ENCODE measurements at regions of chr20 and their contacts with region 1.

Region 1: GRCh38 chr20:9884061-9884460 is 45.2 kb upstream of the PAK5 start:
- DNase-seq: no peak
- H3K4me3 ChIP-seq: no peak overlapping the region
- H3K27ac ChIP-seq: no peak overlapping the region
- H3K4me1 ChIP-seq: peaks cover 0 to 2% (median 0%) of the 10 kb centered on the region in 4 experiments; a peak in 1 of 7 replicates
- H3K27me3 ChIP-seq: no peaks in the 10 kb centered on the region
- CTCF ChIP-seq: peak in 2 of 3 experiments; percentile 25 to 43; a peak in 2 of 4 replicates
- EP300 ChIP-seq: no peak
- POLR2A ChIP-seq: no peak
- RAD21 ChIP-seq: peak; percentile 65 to 75

Region 2: DNA sequence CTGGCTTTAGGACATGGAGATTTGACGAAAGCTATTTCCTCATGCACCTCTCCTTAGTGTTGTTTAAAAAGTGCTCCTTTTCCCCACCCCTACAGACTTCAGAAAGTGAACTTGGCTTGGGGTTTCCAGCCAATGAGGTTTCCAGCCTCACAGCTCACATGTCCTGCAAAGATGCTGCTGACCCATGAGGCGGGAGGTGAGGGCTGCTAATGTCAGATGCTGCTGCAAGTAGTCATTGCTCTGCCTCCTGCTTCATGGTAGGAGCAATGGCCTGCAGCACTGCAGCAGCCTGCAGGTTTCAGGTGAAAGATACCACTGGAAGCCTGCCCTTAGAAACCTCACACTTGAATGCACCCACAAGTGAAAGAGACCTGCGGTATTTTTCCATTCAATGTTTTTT is 256.8 kb before region 1 on chr20:
- CTCF ChIA-PET with region 1: interaction called, 12 read pairs
- POLR2A ChIA-PET with region 1: no interaction called
- DNase-seq: no peak
- H3K4me3 ChIP-seq: no peak overlapping the region
- H3K27ac ChIP-seq: no peak overlapping the region
- H3K4me1 ChIP-seq: no peaks in the 10 kb centered on the region
- H3K27me3 ChIP-seq: no peaks in the 10 kb centered on the region
- CTCF ChIP-seq: no peak
- EP300 ChIP-seq: no peak
- POLR2A ChIP-seq: no peak
- RAD21 ChIP-seq: no peak

Region 3: DNA sequence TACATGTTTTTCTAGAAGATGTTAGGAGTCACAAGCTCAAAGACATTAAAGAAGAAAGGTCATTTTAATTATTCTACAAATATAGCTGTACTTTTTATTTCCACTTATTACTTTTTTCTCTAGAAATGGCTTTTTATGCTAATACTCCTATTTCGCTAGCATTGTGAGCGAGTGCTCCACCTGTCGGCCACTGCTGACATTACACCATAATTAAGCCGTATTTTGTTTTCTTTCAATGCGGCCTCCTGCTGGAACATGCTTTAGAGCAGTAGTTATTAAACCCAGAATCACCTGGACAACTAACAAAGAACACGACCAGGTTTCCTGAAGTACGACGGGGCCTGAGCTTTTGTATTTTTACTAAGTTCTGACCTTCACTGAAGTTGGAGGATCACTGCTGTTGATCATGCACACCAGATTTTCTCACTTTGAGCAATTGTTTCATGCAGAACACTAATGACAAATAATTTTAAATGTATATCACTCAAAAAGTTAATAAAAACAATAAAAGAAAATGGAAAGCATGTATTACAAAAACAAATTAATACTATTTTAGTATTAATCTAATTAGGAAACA is 28.9 kb after region 1 on chr20:
- CTCF ChIA-PET with region 1: interaction called, 19 read pairs
- POLR2A ChIA-PET with region 1: no interaction called
- DNase-seq: peak in 1 of 2 experiments; percentile 72
- H3K4me3 ChIP-seq: no peak overlapping the region
- H3K27ac ChIP-seq: no peak overlapping the region
- H3K4me1 ChIP-seq: no peaks in the 10 kb centered on the region
- H3K27me3 ChIP-seq: no peaks in the 10 kb centered on the region
- CTCF ChIP-seq: peak in 2 of 3 experiments; percentile 70 to 74; a peak in 3 of 4 replicates
- EP300 ChIP-seq: no peak
- POLR2A ChIP-seq: no peak
- RAD21 ChIP-seq: peak; percentile 60 to 62

Region 4: GRCh38 chr20:9974325-9974724 is 90.3 kb after region 1 on chr20:
- CTCF ChIA-PET with region 1: no interaction called
- POLR2A ChIA-PET with region 1: no interaction called
- DNase-seq: no peak
- H3K4me3 ChIP-seq: no peak overlapping the region
- H3K27ac ChIP-seq: no peak overlapping the region
- H3K4me1 ChIP-seq: no peaks in the 10 kb centered on the region
- H3K27me3 ChIP-seq: no peaks in the 10 kb centered on the region
- CTCF ChIP-seq: peak; percentile 31 to 35 (median 32); a peak in 3 of 4 replicates
- EP300 ChIP-seq: no peak
- POLR2A ChIP-seq: no peak
- RAD21 ChIP-seq: peak; percentile 30 to 48